ENCODE measurements at regions of chr3 and their contacts with region 1.

Region 1: DNA sequence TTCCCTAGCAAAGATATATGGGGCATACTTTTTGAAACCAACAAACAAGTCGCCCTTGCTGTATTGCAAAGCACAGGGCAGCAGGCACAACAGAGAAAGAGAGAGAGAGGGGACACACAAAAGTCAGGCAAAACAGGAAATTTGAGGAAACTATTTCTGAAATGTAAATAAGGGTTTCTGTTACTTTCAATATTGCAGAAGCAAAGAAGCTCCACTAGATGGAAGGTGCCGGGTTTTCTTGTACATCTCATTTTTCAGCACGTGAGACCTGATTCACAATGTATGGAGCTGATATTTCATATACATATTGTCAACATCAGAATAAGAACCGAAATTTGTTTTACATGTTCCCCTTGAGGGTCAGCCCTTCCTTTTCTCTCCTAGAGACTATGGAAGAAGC is 127.4 kb downstream of the FOXP1 start:
- DNase-seq: peak in 5 of 9 donors; percentile 41 to 65 (median 57)
- ATAC-seq: peak; percentile 59
- H3K4me3 ChIP-seq: peak overlapping the region; percentile 23
- H3K4me3 Mint-ChIP-seq: peak overlapping the region; percentile 75 to 90 (median 78)
- H3K27ac ChIP-seq: peak overlapping the region; percentile 90
- H3K27ac Mint-ChIP-seq: peak overlapping the region; percentile 90 to 99 (median 97)
- H3K4me1 ChIP-seq: peaks cover 72 to 84% of the 10 kb centered on the region in 2 donors
- H3K4me1 Mint-ChIP-seq: peaks cover 56 to 100% (median 92%) of the 10 kb centered on the region in 7 donors
- H3K27me3 ChIP-seq: no peaks in the 10 kb centered on the region
- H3K27me3 Mint-ChIP-seq: peaks cover 0 to 13% (median 0%) of the 10 kb centered on the region in 5 donors

Region 2: GRCh38 chr3:70531063-70531657 is 925.0 kb before region 1 on chr3:
- CTCF ChIA-PET with region 1: no interaction called
- POLR2A ChIA-PET with region 1: no interaction called
- intact Hi-C with region 1: no loop called
- DNase-seq: peak in 4 of 9 donors; percentile 4 to 9 (median 6)
- ATAC-seq: no peak
- H3K4me3 ChIP-seq: no peak overlapping the region
- H3K4me3 Mint-ChIP-seq: no peak overlapping the region
- H3K27ac ChIP-seq: no peak overlapping the region
- H3K27ac Mint-ChIP-seq: no peak overlapping the region
- H3K4me1 ChIP-seq: no peaks in the 10 kb centered on the region
- H3K4me1 Mint-ChIP-seq: no peaks in the 10 kb centered on the region
- H3K27me3 ChIP-seq: no peaks in the 10 kb centered on the region
- H3K27me3 Mint-ChIP-seq: peaks cover 2 to 15% (median 10%) of the 10 kb centered on the region in 5 donors

Region 3: GRCh38 chr3:71369701-71370391 is 86.3 kb before region 1 on chr3:
- CTCF ChIA-PET with region 1: no interaction called
- POLR2A ChIA-PET with region 1: interaction called, 4 read pairs
- intact Hi-C with region 1: loop called in 1 of 2 experiments (anchors 1 kb)
- DNase-seq: no peak
- ATAC-seq: no peak
- H3K4me3 ChIP-seq: no peak overlapping the region
- H3K4me3 Mint-ChIP-seq: peak overlapping the region in 2 of 10 donors; percentile 12 to 73
- H3K27ac ChIP-seq: peak overlapping the region; percentile 88
- H3K27ac Mint-ChIP-seq: peak overlapping the region in 8 of 9 donors; percentile 88 to 100 (median 96)
- H3K4me1 ChIP-seq: peaks cover 19 to 78% of the 10 kb centered on the region in 2 donors
- H3K4me1 Mint-ChIP-seq: peaks cover 10 to 94% (median 89%) of the 10 kb centered on the region in 7 donors
- H3K27me3 ChIP-seq: no peaks in the 10 kb centered on the region
- H3K27me3 Mint-ChIP-seq: peaks cover 0 to 39% (median 0%) of the 10 kb centered on the region in 5 donors

Region 4: DNA sequence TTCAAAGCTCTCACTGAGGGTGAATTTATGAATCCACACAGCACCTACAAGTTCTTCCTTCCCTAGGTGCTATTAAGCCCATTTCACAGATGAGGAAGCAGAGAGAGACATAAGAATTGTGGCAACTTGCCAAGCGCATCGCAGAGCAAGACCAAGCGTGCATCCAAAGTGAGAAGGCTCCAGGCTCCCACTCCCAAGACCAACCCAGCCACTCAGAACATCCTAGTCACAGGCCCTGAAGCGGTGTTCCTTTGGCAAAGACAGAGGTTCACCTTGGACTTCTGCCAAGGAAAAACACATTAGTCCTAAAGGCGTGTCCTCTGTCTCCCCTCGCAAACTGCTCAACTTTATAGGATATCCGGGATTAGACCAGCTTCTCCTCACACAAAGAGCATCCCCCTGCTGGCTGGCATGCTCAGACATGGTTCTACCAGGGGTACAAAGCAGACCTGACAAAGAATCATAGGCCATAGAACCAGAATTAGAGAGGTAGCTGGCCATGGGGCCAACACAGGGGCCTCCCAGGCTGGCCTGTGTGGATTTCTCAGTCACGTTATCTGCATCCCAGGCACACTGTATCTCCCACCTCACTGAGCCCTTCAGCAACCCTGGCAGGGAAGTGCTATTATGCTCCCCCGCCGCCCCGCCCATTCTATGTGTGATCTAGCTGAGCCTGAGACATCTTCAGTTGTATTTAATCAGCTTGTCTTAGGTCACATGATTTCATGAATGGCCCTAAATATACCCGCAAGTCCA is 32.8 kb before region 1 on chr3:
- CTCF ChIA-PET with region 1: interaction called, 6 read pairs
- POLR2A ChIA-PET with region 1: interaction called, 356 read pairs
- intact Hi-C with region 1: loop called in 1 of 2 experiments (anchors 1 kb)
- DNase-seq: no peak
- ATAC-seq: no peak
- H3K4me3 ChIP-seq: peak overlapping the region; percentile 24
- H3K4me3 Mint-ChIP-seq: peak overlapping the region in 9 of 10 donors; percentile 35 to 85 (median 65)
- H3K27ac ChIP-seq: peak overlapping the region; percentile 73
- H3K27ac Mint-ChIP-seq: peak overlapping the region; percentile 78 to 99 (median 98)
- H3K4me1 ChIP-seq: peaks cover 28 to 80% of the 10 kb centered on the region in 2 donors
- H3K4me1 Mint-ChIP-seq: peaks cover 42 to 98% (median 95%) of the 10 kb centered on the region in 7 donors
- H3K27me3 ChIP-seq: no peaks in the 10 kb centered on the region
- H3K27me3 Mint-ChIP-seq: peaks cover 0 to 46% (median 0%) of the 10 kb centered on the region in 5 donors

Region 5: DNA sequence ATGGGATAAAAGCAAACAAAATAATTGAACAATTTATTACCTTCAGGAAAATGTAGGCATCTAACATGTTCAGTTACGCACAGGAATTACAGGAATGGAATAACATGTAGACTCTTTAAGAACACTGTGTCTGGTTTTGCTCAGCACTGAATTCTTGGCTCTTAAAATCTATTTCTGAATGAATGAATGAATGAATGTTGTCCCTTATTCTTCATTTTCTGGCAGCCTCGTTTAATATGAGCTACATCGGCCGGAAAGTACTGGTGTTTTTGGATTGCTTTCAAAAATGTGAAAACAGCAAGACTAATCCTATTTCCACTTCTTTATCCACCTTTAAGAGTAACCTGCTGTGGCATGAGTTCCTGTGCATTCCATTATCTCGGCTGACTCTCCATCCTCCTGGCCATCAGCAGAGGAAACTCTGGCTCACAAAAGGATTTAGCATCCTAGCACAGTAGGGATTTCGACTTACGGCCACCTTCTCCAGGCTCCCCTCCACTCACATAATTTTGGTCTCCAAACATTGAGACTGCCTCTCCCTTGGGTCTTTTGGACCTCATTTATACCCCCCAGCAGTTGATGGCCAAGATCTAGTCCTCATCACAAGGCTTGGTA is 18.0 kb before region 1 on chr3:
- CTCF ChIA-PET with region 1: interaction called, 17 read pairs
- POLR2A ChIA-PET with region 1: interaction called, 356 read pairs
- intact Hi-C with region 1: no loop called
- DNase-seq: no peak
- ATAC-seq: no peak
- H3K4me3 ChIP-seq: peak overlapping the region; percentile 2
- H3K4me3 Mint-ChIP-seq: peak overlapping the region in 9 of 10 donors; percentile 71 to 83 (median 76)
- H3K27ac ChIP-seq: peak overlapping the region; percentile 90
- H3K27ac Mint-ChIP-seq: peak overlapping the region in 8 of 9 donors; percentile 94 to 99 (median 98)
- H3K4me1 ChIP-seq: peaks cover 71 to 90% of the 10 kb centered on the region in 2 donors
- H3K4me1 Mint-ChIP-seq: peaks cover 70 to 94% (median 89%) of the 10 kb centered on the region in 7 donors
- H3K27me3 ChIP-seq: no peaks in the 10 kb centered on the region
- H3K27me3 Mint-ChIP-seq: peaks cover 0 to 2% (median 0%) of the 10 kb centered on the region in 5 donors

Region 6: GRCh38 chr3:71478568-71478967 is 22.4 kb after region 1 on chr3:
- CTCF ChIA-PET with region 1: interaction called, 6 read pairs
- POLR2A ChIA-PET with region 1: interaction called, 56 read pairs
- intact Hi-C with region 1: no loop called
- DNase-seq: peak in 8 of 9 donors; percentile 37 to 88 (median 68)
- ATAC-seq: peak; percentile 88
- H3K4me3 ChIP-seq: no peak overlapping the region
- H3K4me3 Mint-ChIP-seq: peak overlapping the region in 9 of 10 donors; percentile 59 to 98 (median 86)
- H3K27ac ChIP-seq: peak overlapping the region; percentile 89
- H3K27ac Mint-ChIP-seq: peak overlapping the region; percentile 57 to 100 (median 99)
- H3K4me1 ChIP-seq: peaks cover 12 to 72% of the 10 kb centered on the region in 2 donors
- H3K4me1 Mint-ChIP-seq: peaks cover 36 to 99% (median 93%) of the 10 kb centered on the region in 7 donors
- H3K27me3 ChIP-seq: no peaks in the 10 kb centered on the region
- H3K27me3 Mint-ChIP-seq: no peaks in the 10 kb centered on the region

Region 7: GRCh38 chr3:71495708-71496472 is 39.7 kb after region 1 on chr3:
- CTCF ChIA-PET with region 1: interaction called, 18 read pairs
- POLR2A ChIA-PET with region 1: interaction called, 182 read pairs
- intact Hi-C with region 1: loop called in 1 of 2 experiments (anchors 1 kb)
- DNase-seq: peak in 2 of 9 donors; percentile 24 to 34
- ATAC-seq: no peak
- H3K4me3 ChIP-seq: peak overlapping the region; percentile 33
- H3K4me3 Mint-ChIP-seq: peak overlapping the region; percentile 52 to 98 (median 80)
- H3K27ac ChIP-seq: peak overlapping the region; percentile 89
- H3K27ac Mint-ChIP-seq: peak overlapping the region; percentile 77 to 100 (median 98)
- H3K4me1 ChIP-seq: peaks cover 43 to 71% of the 10 kb centered on the region in 2 donors
- H3K4me1 Mint-ChIP-seq: peaks cover 54 to 90% (median 85%) of the 10 kb centered on the region in 7 donors
- H3K27me3 ChIP-seq: no peaks in the 10 kb centered on the region
- H3K27me3 Mint-ChIP-seq: no peaks in the 10 kb centered on the region